ENCODE measurements at regions of chr7 and their contacts with region 1.

Region 1: GRCh38 chr7:100680167-100680575 is 6.6 kb downstream of the GNB2 start:
- DNase-seq: no peak
- H3K4me3 ChIP-seq: no peak overlapping the region
- H3K27ac ChIP-seq: no peak overlapping the region
- H3K4me1 ChIP-seq: peaks cover 4% of the 10 kb centered on the region
- H3K27me3 ChIP-seq: no peaks in the 10 kb centered on the region
- CTCF ChIP-seq: no peak
- POLR2A ChIP-seq: no peak

Region 2: DNA sequence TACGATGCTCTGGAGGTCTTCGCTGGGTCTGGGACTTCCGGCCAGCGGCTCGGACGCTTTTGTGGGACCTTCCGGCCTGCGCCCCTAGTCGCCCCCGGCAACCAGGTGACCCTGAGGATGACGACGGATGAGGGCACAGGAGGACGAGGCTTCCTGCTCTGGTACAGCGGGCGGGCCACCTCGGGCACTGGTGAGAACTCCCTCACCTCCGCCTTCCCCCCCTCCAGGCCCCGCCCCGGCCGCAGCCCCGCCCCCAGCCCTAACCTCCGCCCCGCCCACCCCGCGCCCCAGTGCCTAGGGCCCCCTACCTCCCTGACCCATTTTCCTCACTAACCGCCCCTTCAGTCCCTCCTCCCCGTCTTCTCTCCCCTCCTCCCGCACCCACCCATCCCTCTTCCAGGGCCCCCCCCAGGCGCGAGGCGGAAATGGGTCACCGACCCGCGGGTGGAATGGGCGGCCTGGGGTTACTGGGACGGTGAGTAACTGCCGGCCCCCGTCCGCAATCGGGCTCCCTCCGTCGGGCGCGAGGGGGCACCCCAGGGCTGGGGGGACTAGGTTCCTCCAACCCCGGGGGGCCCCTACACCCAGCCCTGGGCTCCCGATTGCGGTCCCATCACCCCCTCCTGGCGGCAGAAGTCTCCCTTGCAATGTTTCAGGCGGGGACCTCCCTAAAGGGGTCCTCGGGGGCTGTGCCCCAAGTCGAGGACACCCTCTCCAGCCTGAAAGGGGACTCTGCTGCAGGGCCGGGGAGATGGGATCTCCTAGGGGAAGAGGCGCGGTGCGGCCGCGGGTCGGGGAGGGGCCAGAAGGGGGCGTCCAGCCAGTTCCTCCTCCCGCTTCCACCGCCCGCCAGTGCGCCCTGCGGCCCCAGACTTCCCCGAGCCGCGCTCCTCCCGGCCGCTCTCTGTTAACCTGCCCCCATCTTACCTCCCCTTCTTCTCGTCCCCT is 75.9 kb before region 1 on chr7:
- CTCF ChIA-PET with region 1: interaction called, 3 read pairs
- POLR2A ChIA-PET with region 1: no interaction called
- dilution Hi-C with region 1: no loop called
- intact Hi-C with region 1: loop called (anchors 2 kb)
- DNase-seq: peak; percentile 43
- H3K4me3 ChIP-seq: peak overlapping the region; percentile 44 to 65 (median 54)
- H3K27ac ChIP-seq: no peak overlapping the region
- H3K4me1 ChIP-seq: peaks cover 25% of the 10 kb centered on the region
- H3K27me3 ChIP-seq: no peaks in the 10 kb centered on the region
- CTCF ChIP-seq: peak; percentile 43 to 55
- POLR2A ChIP-seq: no peak

Region 3: DNA sequence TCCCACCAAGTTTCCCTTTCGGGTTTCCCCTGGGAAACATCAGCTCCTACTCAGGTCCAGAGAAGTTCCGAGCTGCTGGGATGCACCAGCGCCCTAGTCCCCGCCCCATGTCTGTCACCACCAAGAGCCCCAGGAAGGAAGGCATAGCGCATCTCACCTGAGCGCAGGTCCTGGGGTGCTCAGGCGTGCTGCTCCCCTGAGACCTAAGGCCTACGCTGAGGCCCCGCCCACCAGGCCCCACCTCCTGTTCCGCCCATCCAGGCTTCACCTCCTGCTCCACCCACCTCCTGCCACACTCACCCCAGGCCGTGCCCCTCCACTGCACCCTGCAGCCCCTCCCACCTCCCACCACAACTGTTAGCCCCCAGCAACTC is 37.6 kb before region 1 on chr7:
- CTCF ChIA-PET with region 1: no interaction called
- POLR2A ChIA-PET with region 1: no interaction called
- dilution Hi-C with region 1: no loop called
- intact Hi-C with region 1: no loop called
- DNase-seq: no peak
- H3K4me3 ChIP-seq: no peak overlapping the region
- H3K27ac ChIP-seq: no peak overlapping the region
- H3K4me1 ChIP-seq: no peaks in the 10 kb centered on the region
- H3K27me3 ChIP-seq: no peaks in the 10 kb centered on the region
- CTCF ChIP-seq: no peak
- POLR2A ChIP-seq: no peak

Region 4: GRCh38 chr7:100827330-100828227 is 147.4 kb after region 1 on chr7 and contains the start of gene EPHB4:
- CTCF ChIA-PET with region 1: no interaction called
- POLR2A ChIA-PET with region 1: no interaction called
- dilution Hi-C with region 1: no loop called
- intact Hi-C with region 1: no loop called
- DNase-seq: peak; percentile 88
- H3K4me3 ChIP-seq: peak within 1 kb of the TSS; percentile 88 to 92 (median 90)
- H3K27ac ChIP-seq: peak within 1 kb of the TSS; percentile 94
- H3K4me1 ChIP-seq: peaks cover 23% of the 10 kb centered on the region
- H3K27me3 ChIP-seq: no peaks in the 10 kb centered on the region
- CTCF ChIP-seq: peak; percentile 42 to 62
- POLR2A ChIP-seq: peak; percentile 17
- total RNA-seq, gene EPHB4: 148 and 193 TPM in 2 replicates

Measured in endothelial cell of umbilical vein (primary cell).